ENCODE measurements at regions of chr11 and their contacts with region 1.

Region 1: GRCh38 chr11:130002846-130003716 is 446 bp upstream of the PRDM10 start:
- DNase-seq: peak; percentile 94 to 95
- ATAC-seq: peak; percentile 85 to 89
- H3K4me3 ChIP-seq: peak overlapping the region; percentile 63
- H3K27ac ChIP-seq: peak overlapping the region; percentile 99 to 100
- H3K4me1 ChIP-seq: peaks cover 19% of the 10 kb centered on the region
- CTCF ChIP-seq: no peak
- EP300 ChIP-seq: no peak
- POLR2A ChIP-seq: peak; percentile 36; the same call in 1 of the 2 replicates
- RAD21 ChIP-seq: no peak

Region 2: GRCh38 chr11:130069684-130070108 is 66.6 kb after region 1 on chr11 and contains the start of gene APLP2:
- CTCF ChIA-PET with region 1: interaction called, 5 read pairs
- POLR2A ChIA-PET with region 1: interaction called, 53 read pairs
- DNase-seq: peak; percentile 82 to 96
- ATAC-seq: peak; percentile 89 to 92
- H3K4me3 ChIP-seq: peak within 1 kb of the TSS; percentile 96
- H3K27ac ChIP-seq: peak within 1 kb of the TSS; percentile 86 to 89
- H3K4me1 ChIP-seq: peaks cover 4% of the 10 kb centered on the region; the same call in 1 of the 3 replicates
- CTCF ChIP-seq: no peak
- EP300 ChIP-seq: no peak
- POLR2A ChIP-seq: peak; percentile 93
- RAD21 ChIP-seq: no peak
- polyA plus RNA-seq, gene APLP2: 166 and 185 TPM in 2 replicates

Region 3: GRCh38 chr11:130131961-130132850 is 129.1 kb after region 1 on chr11:
- CTCF ChIA-PET with region 1: interaction called, 6 read pairs
- POLR2A ChIA-PET with region 1: interaction called, 19 read pairs
- DNase-seq: peak; percentile 61 to 71
- ATAC-seq: peak; percentile 73 to 87; a peak in 4 of 6 replicates
- H3K4me3 ChIP-seq: no peak overlapping the region
- H3K27ac ChIP-seq: no peak overlapping the region
- H3K4me1 ChIP-seq: no peaks in the 10 kb centered on the region
- CTCF ChIP-seq: peak; percentile 66
- EP300 ChIP-seq: no peak
- POLR2A ChIP-seq: no peak
- RAD21 ChIP-seq: peak; percentile 82 to 84

Region 4: GRCh38 chr11:130313383-130314183 is 310.5 kb after region 1 on chr11:
- CTCF ChIA-PET with region 1: no interaction called
- POLR2A ChIA-PET with region 1: interaction called, 10 read pairs
- DNase-seq: no peak
- ATAC-seq: no peak; a peak in 2 of 6 replicates
- H3K4me3 ChIP-seq: peak overlapping the region; percentile 94
- H3K27ac ChIP-seq: peak overlapping the region; percentile 98 to 99
- H3K4me1 ChIP-seq: peaks cover 30% of the 10 kb centered on the region
- CTCF ChIP-seq: no peak
- EP300 ChIP-seq: no peak
- POLR2A ChIP-seq: no peak
- RAD21 ChIP-seq: no peak